PC-9 (cell line): ENCODE measurements at regions of chr1 and their contacts with region 1.

Region 1: DNA sequence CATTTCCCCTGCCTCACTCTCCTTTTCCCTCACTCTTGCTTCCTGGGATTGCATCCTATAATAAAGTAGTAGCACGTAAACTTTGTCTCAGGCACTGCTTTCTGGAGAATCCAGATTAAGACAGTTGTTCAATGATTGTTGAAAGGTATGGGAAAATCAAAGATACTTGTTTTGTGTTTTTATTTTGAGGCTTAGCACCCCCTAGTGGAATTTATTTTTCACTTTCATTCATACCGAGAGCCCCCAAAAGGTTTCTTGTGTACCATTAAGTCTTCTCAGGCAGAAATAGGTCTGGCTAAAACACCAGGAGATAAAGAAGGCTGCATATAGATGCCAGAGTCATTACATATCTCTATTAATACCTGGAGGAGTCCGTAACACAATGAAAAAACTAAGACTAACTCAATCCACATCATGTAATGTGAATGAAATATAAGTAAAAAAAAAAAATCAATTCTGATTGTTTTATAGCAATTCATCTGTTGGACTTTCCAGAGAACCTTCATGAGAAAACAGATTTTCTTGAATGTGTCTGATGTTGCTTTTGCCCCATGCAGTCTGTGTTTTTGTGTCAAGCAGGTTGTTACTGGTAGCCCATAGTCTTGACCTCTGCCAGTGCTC is 103.5 kb downstream of the RPE65 start:
- DNase-seq: no peak
- H3K4me3 ChIP-seq: no peak overlapping the region
- H3K27ac ChIP-seq: no peak overlapping the region
- H3K4me1 ChIP-seq: no peaks in the 10 kb centered on the region
- H3K27me3 ChIP-seq: no peaks in the 10 kb centered on the region
- CTCF ChIP-seq: peak; percentile 78

Region 2: GRCh38 chr1:67535474-67535873 is 810.8 kb before region 1 on chr1:
- CTCF ChIA-PET with region 1: no interaction called
- POLR2A ChIA-PET with region 1: no interaction called
- intact Hi-C with region 1: loop called (anchors 2 kb)
- DNase-seq: peak; percentile 69 to 88
- H3K4me3 ChIP-seq: no peak overlapping the region
- H3K27ac ChIP-seq: no peak overlapping the region
- H3K4me1 ChIP-seq: peaks cover 12% of the 10 kb centered on the region; the same call in 1 of the 2 replicates
- H3K27me3 ChIP-seq: no peaks in the 10 kb centered on the region
- CTCF ChIP-seq: peak; percentile 97

Region 3: GRCh38 chr1:67853704-67854103 is 492.6 kb before region 1 on chr1:
- CTCF ChIA-PET with region 1: interaction called, 12 read pairs
- POLR2A ChIA-PET with region 1: no interaction called
- intact Hi-C with region 1: loop called (anchors 2 kb)
- DNase-seq: peak; percentile 48 to 64
- H3K4me3 ChIP-seq: no peak overlapping the region
- H3K27ac ChIP-seq: no peak overlapping the region
- H3K4me1 ChIP-seq: peaks cover 11% of the 10 kb centered on the region
- H3K27me3 ChIP-seq: no peaks in the 10 kb centered on the region
- CTCF ChIP-seq: peak; percentile 93

Region 4: DNA sequence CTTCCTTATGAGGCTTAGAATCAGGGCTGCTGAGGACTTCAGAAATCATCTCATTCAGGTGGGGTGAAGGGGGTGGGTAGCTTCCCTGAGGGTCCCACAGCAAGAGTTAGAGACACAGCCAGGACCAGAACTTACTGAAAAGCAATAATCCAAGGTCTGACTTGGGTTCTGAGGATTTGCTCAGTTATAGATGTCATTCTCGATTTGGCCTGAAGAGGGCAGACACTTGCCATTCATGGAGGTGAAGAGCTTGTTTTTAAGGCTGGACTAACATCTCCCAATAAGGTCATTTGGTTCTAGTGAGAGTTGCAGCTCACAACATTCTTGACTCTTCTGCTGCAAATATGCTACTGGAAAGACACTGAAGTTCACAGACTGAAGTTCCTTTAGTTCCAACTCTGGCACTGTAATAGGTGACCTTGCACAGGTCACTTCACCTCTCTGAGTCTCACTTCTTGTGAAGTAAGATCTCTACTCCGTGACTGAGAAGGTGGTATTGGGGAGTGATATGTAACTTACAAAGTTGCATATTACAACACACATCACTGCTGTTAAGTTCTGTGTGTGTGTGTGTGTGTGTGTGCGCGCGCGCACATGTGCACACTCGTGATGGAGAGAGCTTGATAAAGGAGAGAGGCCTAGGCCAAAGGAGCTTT is 226.0 kb before region 1 on chr1:
- CTCF ChIA-PET with region 1: interaction called, 11 read pairs
- POLR2A ChIA-PET with region 1: no interaction called
- intact Hi-C with region 1: loop called (anchors 1 kb)
- DNase-seq: peak; percentile 49 to 64
- H3K4me3 ChIP-seq: no peak overlapping the region
- H3K27ac ChIP-seq: no peak overlapping the region
- H3K4me1 ChIP-seq: no peaks in the 10 kb centered on the region
- H3K27me3 ChIP-seq: no peaks in the 10 kb centered on the region
- CTCF ChIP-seq: peak; percentile 98

Region 5: GRCh38 chr1:68384321-68384813 is 38.1 kb after region 1 on chr1:
- CTCF ChIA-PET with region 1: no interaction called
- POLR2A ChIA-PET with region 1: no interaction called
- intact Hi-C with region 1: loop called (anchors 2 kb)
- DNase-seq: peak; percentile 63 to 99
- H3K4me3 ChIP-seq: no peak overlapping the region
- H3K27ac ChIP-seq: peak overlapping the region; percentile 79
- H3K4me1 ChIP-seq: peaks cover 25% of the 10 kb centered on the region
- H3K27me3 ChIP-seq: no peaks in the 10 kb centered on the region
- CTCF ChIP-seq: peak; percentile 72

Region 6: DNA sequence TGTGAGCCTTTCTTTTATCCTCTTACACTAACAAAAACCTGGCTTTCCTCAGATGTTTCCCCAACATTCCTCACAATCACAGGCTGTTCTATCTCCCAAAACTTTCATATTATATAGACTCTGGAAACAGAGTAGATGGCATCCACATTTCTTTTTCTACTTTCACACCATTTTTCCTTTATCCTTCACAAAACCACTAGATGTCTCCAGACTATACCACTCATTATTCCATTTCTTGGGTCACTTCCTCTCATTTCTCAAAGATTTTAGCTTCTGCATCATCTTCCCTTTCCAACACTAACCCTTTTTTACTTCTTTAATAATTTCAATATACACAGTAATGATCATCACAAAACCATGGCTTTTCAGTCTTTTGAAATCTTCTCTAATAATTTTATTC is 436.6 kb after region 1 on chr1:
- CTCF ChIA-PET with region 1: no interaction called
- POLR2A ChIA-PET with region 1: no interaction called
- intact Hi-C with region 1: no loop called
- DNase-seq: no peak
- H3K4me3 ChIP-seq: no peak overlapping the region
- H3K27ac ChIP-seq: no peak overlapping the region
- H3K4me1 ChIP-seq: no peaks in the 10 kb centered on the region
- H3K27me3 ChIP-seq: no peaks in the 10 kb centered on the region
- CTCF ChIP-seq: no peak; the same call in 1 of the 2 replicates

Region 7: GRCh38 chr1:69737527-69738185 is 1391.4 kb after region 1 on chr1:
- CTCF ChIA-PET with region 1: no interaction called
- POLR2A ChIA-PET with region 1: no interaction called
- intact Hi-C with region 1: loop called (anchors 10 kb)
- DNase-seq: peak; percentile 26 to 40
- H3K4me3 ChIP-seq: no peak overlapping the region
- H3K27ac ChIP-seq: no peak overlapping the region
- H3K4me1 ChIP-seq: no peaks in the 10 kb centered on the region
- H3K27me3 ChIP-seq: no peaks in the 10 kb centered on the region
- CTCF ChIP-seq: peak; percentile 78